HepG2 (cell line): ENCODE measurements at regions of chr11 and their contacts with region 1.

Region 1: GRCh38 chr11:118907051-118908042 is 18.4 kb downstream of the BCL9L start:
- DNase-seq: peak; percentile 73
- ATAC-seq: peak; percentile 46
- H3K4me3 ChIP-seq: no peak overlapping the region
- H3K27ac ChIP-seq: no peak overlapping the region
- H3K4me1 ChIP-seq: peaks cover 44% of the 10 kb centered on the region
- H3K27me3 ChIP-seq: no peaks in the 10 kb centered on the region; a peak in 1 of 5 replicates
- CTCF ChIP-seq: peak; percentile 99
- EP300 ChIP-seq: no peak
- POLR2A ChIP-seq: no peak
- RAD21 ChIP-seq: peak; percentile 99

Region 2: GRCh38 chr11:118791111-118791965 is 116.0 kb before region 1 on chr11 and contains the start of gene DDX6:
- CTCF ChIA-PET with region 1: no interaction called
- POLR2A ChIA-PET with region 1: interaction called, 35 read pairs
- in situ Hi-C with region 1: no loop called
- intact Hi-C with region 1: no loop called
- DNase-seq: peak; percentile 67
- ATAC-seq: peak; percentile 80
- H3K4me3 ChIP-seq: peak within 1 kb of the TSS; percentile 91 to 98 (median 97)
- H3K27ac ChIP-seq: peak within 1 kb of the TSS; percentile 99
- H3K4me1 ChIP-seq: peaks cover 34% of the 10 kb centered on the region
- H3K27me3 ChIP-seq: peaks cover 0 to 2% of the 10 kb centered on the region in 2 experiments; a peak in 2 of 5 replicates
- CTCF ChIP-seq: peak; percentile 64
- EP300 ChIP-seq: no peak
- POLR2A ChIP-seq: peak; percentile 58 to 83
- RAD21 ChIP-seq: no peak
- total RNA-seq, gene DDX6: 59.2 and 163 TPM in 2 replicates

Region 3: DNA sequence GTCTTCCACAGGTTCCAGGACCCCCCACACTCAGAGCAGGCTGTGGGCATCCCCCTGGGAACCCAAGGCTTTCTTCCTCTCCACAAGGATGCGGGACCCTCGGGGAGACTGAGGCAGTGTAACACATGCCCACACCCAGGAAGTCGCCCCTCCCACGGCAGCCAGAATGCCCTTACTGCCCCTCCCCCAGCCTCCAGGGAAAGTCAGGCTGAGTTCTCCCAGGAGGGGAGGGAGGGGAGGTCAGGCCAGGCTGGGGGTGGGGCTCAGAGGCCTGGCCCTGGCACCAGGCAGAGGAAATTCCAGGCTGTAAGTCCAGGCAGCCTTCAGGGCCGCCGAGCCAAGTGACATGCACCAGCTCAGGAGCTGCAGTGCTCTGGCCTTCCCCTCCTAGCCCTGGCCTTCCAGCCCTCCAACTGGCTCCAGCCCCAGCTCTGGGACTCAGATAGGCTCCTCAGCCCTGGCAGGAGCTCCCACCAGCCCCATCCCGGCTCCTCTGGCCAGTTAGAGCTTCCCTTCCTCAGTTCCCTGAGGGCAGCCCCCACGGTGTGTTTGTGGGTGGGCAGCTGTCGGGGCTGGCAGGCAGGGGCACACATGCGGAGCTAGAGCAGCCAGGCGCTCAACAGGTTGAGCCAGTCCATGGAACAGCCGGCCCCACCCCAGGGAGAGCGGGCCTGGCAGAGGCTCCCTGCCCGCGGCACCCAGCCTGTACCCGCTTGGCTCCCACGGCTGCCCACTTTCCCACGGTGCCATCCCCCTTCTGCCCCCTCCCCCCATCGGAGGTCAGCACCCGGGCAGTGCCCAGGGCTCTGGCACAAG is 14.8 kb after region 1 on chr11:
- CTCF ChIA-PET with region 1: interaction called, 188 read pairs
- POLR2A ChIA-PET with region 1: no interaction called
- in situ Hi-C with region 1: no loop called
- intact Hi-C with region 1: loop called (anchors 1 kb)
- DNase-seq: peak; percentile 80
- ATAC-seq: peak; percentile 40
- H3K4me3 ChIP-seq: peak overlapping the region; percentile 87 to 97 (median 90)
- H3K27ac ChIP-seq: peak overlapping the region; percentile 88
- H3K4me1 ChIP-seq: peaks cover 83% of the 10 kb centered on the region
- H3K27me3 ChIP-seq: no peaks in the 10 kb centered on the region; a peak in 1 of 5 replicates
- CTCF ChIP-seq: no peak
- EP300 ChIP-seq: peak in 1 of 2 experiments; percentile 36; a peak in 1 of 4 replicates
- POLR2A ChIP-seq: peak in 1 of 2 experiments; percentile 51; a peak in 2 of 4 replicates
- RAD21 ChIP-seq: no peak

Region 4: DNA sequence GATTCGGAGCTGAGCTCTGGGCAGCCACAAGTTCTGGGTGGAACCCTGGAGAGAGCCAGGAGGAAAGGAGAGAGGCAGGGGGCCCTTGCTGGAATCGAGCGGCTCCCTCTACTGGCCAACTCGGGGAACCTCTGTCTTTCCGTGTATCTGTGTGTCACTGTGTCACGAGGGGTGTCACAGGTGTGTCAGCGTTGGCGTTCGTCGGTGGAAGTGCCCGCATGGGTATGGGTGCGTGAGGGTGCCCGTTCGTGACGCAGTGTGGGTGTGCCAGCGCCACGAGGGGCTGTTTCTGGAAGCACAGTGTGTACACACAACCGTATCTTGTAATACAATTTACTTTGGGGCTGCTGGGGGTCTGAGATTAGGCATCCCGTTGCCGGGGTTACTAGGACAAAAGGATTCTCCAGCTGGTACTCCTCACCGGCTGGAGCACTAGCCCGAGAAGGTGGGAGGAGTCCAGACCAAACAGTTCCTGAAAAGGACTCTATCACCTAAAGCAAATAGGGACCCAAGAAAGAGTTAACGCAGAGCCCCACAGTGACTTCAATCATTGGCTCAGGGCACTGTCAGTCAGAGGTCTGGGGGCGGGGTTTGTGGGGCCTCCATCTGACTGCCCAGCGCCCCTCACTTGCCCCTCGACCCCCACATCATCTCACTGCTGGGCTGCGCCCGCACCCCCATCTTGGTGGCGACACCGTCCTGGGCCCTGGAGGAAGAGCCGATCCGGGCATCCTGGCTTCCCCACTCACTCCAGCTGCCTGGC is 20.9 kb after region 1 on chr11:
- CTCF ChIA-PET with region 1: interaction called, 188 read pairs
- POLR2A ChIA-PET with region 1: interaction called, 7 read pairs
- in situ Hi-C with region 1: no loop called
- intact Hi-C with region 1: loop called (anchors 1 kb)
- DNase-seq: peak; percentile 87
- ATAC-seq: peak; percentile 77
- H3K4me3 ChIP-seq: peak overlapping the region; percentile 71 to 89 (median 81)
- H3K27ac ChIP-seq: peak overlapping the region; percentile 50
- H3K4me1 ChIP-seq: peaks cover 58% of the 10 kb centered on the region
- H3K27me3 ChIP-seq: peaks cover 2 to 7% of the 10 kb centered on the region in 2 experiments; a peak in 3 of 5 replicates
- CTCF ChIP-seq: peak; percentile 94
- EP300 ChIP-seq: no peak
- POLR2A ChIP-seq: no peak
- RAD21 ChIP-seq: peak; percentile 88

Region 5: DNA sequence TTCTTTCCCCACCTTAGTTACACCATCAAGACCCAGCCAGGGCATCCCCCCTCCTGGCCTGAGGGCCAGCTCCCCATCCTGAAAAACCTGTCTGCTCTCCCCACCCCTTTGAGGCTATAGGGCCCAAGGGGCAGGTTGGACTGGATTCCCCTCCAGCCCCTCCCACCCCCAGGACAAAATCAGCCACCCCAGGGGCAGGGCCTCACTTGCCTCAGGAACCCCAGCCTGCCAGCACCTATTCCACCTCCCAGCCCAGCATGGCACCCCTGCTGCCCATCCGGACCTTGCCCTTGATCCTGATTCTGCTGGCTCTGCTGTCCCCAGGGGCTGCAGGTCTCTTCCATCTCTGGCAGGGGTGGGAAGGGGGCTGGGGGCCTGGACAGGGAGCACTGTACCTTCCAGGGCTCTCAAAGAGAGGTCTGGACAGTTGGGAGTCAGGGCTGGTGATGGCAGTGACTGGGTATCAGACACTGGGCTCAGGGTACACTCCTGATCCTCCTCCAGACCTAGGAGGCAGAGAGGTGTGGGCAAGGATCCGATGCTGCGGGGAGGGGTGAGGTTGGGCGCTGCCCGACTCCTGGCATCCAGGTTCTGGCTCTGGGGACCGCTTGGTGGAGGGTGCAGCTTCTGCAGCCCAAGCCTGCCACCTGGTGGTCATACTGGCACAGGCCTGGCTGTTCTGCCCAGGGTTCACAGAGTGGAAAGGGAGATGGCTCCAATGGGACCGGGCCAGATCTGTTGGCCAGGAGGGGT is 48.9 kb after region 1 on chr11 and contains the start of gene UPK2:
- CTCF ChIA-PET with region 1: interaction called, 38 read pairs
- POLR2A ChIA-PET with region 1: no interaction called
- in situ Hi-C with region 1: no loop called
- intact Hi-C with region 1: loop called (anchors 1 kb)
- DNase-seq: peak; percentile 64
- ATAC-seq: peak; percentile 97
- H3K4me3 ChIP-seq: no peak within 1 kb of the TSS
- H3K27ac ChIP-seq: no peak within 1 kb of the TSS
- H3K4me1 ChIP-seq: no peaks in the 10 kb centered on the region
- H3K27me3 ChIP-seq: peaks cover 2 to 53% of the 10 kb centered on the region in 2 experiments; a peak in 4 of 5 replicates
- CTCF ChIP-seq: peak; percentile 98
- EP300 ChIP-seq: no peak
- POLR2A ChIP-seq: no peak
- RAD21 ChIP-seq: peak; percentile 97
- total RNA-seq, gene UPK2: not detected in 2 replicates

Region 6: GRCh38 chr11:118997627-118998387 is 90.5 kb after region 1 on chr11 and contains the start of gene CENATAC:
- CTCF ChIA-PET with region 1: no interaction called
- POLR2A ChIA-PET with region 1: interaction called, 11 read pairs
- in situ Hi-C with region 1: no loop called
- intact Hi-C with region 1: no loop called
- DNase-seq: peak; percentile 91
- ATAC-seq: peak; percentile 95
- H3K4me3 ChIP-seq: peak within 1 kb of the TSS; percentile 79 to 91 (median 90)
- H3K27ac ChIP-seq: peak within 1 kb of the TSS; percentile 56
- H3K4me1 ChIP-seq: peaks cover 42% of the 10 kb centered on the region
- H3K27me3 ChIP-seq: no peaks in the 10 kb centered on the region; a peak in 1 of 5 replicates
- CTCF ChIP-seq: no peak
- EP300 ChIP-seq: no peak
- POLR2A ChIP-seq: peak; percentile 74 to 98
- RAD21 ChIP-seq: no peak
- total RNA-seq, gene CENATAC: 9.2 and 25.0 TPM in 2 replicates

Region 7: GRCh38 chr11:119077839-119078238 is 170.5 kb after region 1 on chr11:
- CTCF ChIA-PET with region 1: no interaction called
- POLR2A ChIA-PET with region 1: no interaction called
- in situ Hi-C with region 1: no loop called
- intact Hi-C with region 1: no loop called
- DNase-seq: no peak
- ATAC-seq: no peak
- H3K4me3 ChIP-seq: no peak overlapping the region
- H3K27ac ChIP-seq: no peak overlapping the region
- H3K4me1 ChIP-seq: no peaks in the 10 kb centered on the region
- H3K27me3 ChIP-seq: no peaks in the 10 kb centered on the region
- CTCF ChIP-seq: no peak
- EP300 ChIP-seq: no peak
- POLR2A ChIP-seq: no peak
- RAD21 ChIP-seq: no peak